HEK293T (cell line): ENCODE measurements at regions of chr18 and their contacts with region 1.

Region 1: GRCh38 chr18:36757081-36757480 is 71.7 kb downstream of the TPGS2 start:
- DNase-seq: peak; percentile 85

Region 2: GRCh38 chr18:36688020-36688965 is 68.8 kb before region 1 on chr18:
- CTCF ChIA-PET with region 1: interaction called, 22 read pairs
- POLR2A ChIA-PET with region 1: no interaction called
- DNase-seq: peak; percentile 89

Region 3: DNA sequence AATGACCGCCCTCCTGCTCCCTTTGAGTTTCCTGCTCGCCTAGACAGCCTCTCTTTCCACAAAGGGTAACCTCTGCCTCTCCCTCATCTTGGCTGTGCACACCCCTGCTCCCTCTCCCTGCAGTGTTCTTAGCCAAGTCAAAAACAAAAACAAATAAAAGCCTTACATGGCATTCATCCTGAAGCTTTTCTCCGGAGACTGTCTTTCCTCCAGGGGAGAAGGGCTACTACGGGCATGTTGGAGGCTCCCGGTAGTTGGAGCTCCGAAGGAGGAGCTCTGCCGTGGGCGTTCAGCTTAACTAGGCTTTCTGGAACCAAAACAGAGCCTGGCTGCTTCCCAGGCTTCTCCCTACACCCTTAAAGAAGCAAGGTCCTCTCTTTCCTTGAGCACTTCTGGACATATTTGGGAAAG is 32.5 kb before region 1 on chr18:
- CTCF ChIA-PET with region 1: no interaction called
- POLR2A ChIA-PET with region 1: no interaction called
- DNase-seq: no peak

Region 4: DNA sequence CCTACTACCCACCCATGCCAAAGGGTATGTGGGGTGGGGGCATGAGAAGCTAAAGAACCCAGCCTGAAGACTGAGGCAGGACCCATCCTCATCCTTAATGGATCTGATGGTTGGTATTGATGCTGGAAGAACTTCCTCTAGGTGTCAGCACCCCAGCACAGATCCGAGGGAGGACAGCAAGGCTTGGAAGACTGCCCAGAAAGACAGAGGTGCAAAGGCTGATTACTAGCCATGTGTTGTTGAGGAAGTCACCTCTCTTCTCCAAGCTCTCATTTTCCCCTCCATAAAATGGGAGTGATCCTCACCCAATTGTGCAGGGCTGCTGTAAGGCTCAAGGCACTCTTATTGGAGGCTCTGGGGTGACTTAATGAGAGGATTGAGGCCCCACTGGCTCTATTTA is 552.0 kb after region 1 on chr18:
- CTCF ChIA-PET with region 1: no interaction called
- POLR2A ChIA-PET with region 1: no interaction called
- DNase-seq: no peak